CD8-positive, alpha-beta T cell (primary cell): ENCODE measurements at regions of chr13 and their contacts with region 1.

Region 1: GRCh38 chr13:92510416-92510815 is 716.2 kb upstream of the GPC6 start:
- DNase-seq: no peak
- ATAC-seq: no peak
- H3K4me3 ChIP-seq: no peak overlapping the region
- H3K4me3 Mint-ChIP-seq: no peak overlapping the region
- H3K27ac ChIP-seq: no peak overlapping the region
- H3K27ac Mint-ChIP-seq: no peak overlapping the region
- H3K4me1 ChIP-seq: no peaks in the 10 kb centered on the region
- H3K4me1 Mint-ChIP-seq: no peaks in the 10 kb centered on the region
- H3K27me3 ChIP-seq: no peaks in the 10 kb centered on the region
- H3K27me3 Mint-ChIP-seq: no peaks in the 10 kb centered on the region
- CTCF ChIP-seq: no peak

Region 2: GRCh38 chr13:92530364-92530763 is 19.9 kb after region 1 on chr13:
- CTCF ChIA-PET with region 1: no interaction called
- POLR2A ChIA-PET with region 1: no interaction called
- intact Hi-C with region 1: loop called in 1 of 2 experiments (anchors 1 kb)
- DNase-seq: no peak
- ATAC-seq: no peak
- H3K4me3 ChIP-seq: no peak overlapping the region
- H3K4me3 Mint-ChIP-seq: no peak overlapping the region
- H3K27ac ChIP-seq: no peak overlapping the region
- H3K27ac Mint-ChIP-seq: no peak overlapping the region
- H3K4me1 ChIP-seq: no peaks in the 10 kb centered on the region
- H3K4me1 Mint-ChIP-seq: no peaks in the 10 kb centered on the region
- H3K27me3 ChIP-seq: no peaks in the 10 kb centered on the region
- H3K27me3 Mint-ChIP-seq: no peaks in the 10 kb centered on the region
- CTCF ChIP-seq: no peak